ENCODE measurements at regions of chr12 and their contacts with region 1.

Region 1: DNA sequence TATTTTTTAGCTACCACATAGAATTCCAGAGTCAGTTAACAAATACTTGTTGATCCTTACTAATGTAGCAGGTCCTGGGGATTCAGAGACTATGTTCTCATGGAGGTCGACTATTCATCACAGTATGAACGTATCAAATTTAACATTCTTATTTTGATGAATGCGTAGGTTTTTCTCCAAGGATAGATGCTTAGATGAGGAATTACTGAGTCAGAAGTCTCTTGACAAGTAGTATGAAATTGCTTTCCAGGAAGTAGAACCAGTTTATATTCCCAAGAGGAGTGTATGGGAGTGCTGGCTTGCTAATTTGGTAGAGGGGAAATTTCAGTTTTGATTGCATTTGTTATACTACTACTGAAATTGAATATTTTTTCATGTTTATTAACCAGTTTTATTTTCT is 42.8 kb upstream of the CRADD start:
- DNase-seq: no peak
- H3K4me3 ChIP-seq: no peak overlapping the region
- H3K27ac ChIP-seq: no peak overlapping the region
- H3K4me1 ChIP-seq: no peaks in the 10 kb centered on the region
- H3K27me3 ChIP-seq: peaks cover 4% of the 10 kb centered on the region
- CTCF ChIP-seq: no peak
- EP300 ChIP-seq: no peak
- POLR2A ChIP-seq: no peak

Region 2: GRCh38 chr12:93593843-93594242 is 40.6 kb before region 1 on chr12:
- in situ Hi-C with region 1: no loop called
- intact Hi-C with region 1: no loop called
- DNase-seq: no peak
- H3K4me3 ChIP-seq: no peak overlapping the region
- H3K27ac ChIP-seq: peak overlapping the region; percentile 10 to 80 (median 72)
- H3K4me1 ChIP-seq: peaks cover 0 to 14% (median 0%) of the 10 kb centered on the region in 4 donors
- H3K27me3 ChIP-seq: peaks cover 18% of the 10 kb centered on the region
- CTCF ChIP-seq: no peak
- EP300 ChIP-seq: no peak
- POLR2A ChIP-seq: no peak

Region 3: DNA sequence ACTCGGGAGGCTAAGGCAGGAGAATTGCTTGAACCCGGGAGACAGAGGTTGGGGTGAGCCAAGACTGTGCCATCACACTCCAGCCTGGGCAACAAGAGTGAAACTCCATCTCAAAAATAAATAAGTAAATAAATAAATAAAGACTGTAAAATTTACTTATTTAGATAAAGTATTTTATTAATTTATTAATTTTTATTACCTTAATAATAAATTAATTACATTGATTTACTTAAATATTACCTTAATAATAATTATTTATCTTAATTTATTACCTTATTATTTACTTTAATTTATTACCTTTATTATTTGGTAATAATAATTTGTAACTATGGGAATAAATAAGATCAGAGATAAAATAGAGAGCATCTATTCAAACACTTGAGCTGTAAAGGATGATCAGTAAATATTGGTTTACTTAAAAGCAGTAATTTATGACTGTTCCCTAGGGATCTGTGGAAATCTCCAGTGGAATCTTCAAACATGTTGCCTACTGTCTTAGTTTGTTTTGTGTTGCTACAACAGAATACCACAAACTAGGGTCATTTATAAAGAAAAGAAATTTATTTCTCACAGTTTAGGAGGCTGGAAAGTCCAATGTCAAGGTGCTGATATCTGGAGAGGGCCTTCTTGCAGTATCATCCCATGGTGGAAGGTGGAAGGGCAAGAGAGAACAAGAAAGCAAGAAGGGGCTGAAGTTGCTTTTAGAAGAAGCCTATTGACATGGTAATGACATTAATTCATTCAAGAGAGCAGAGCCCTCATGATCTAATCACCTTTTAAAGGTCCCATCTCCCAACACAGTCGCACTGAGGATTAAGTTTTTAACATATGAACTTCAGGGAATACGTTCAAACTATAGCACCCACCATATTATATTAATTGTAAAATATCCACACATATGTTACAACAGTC is 24.9 kb before region 1 on chr12:
- in situ Hi-C with region 1: no loop called
- intact Hi-C with region 1: loop called (anchors 1 kb)
- DNase-seq: no peak
- H3K4me3 ChIP-seq: no peak overlapping the region
- H3K27ac ChIP-seq: no peak overlapping the region
- H3K4me1 ChIP-seq: no peaks in the 10 kb centered on the region
- H3K27me3 ChIP-seq: no peaks in the 10 kb centered on the region
- CTCF ChIP-seq: no peak
- EP300 ChIP-seq: no peak
- POLR2A ChIP-seq: no peak

Measured in transverse colon (tissue), 4 donors.